IMR-90 (cell line): ENCODE measurements at regions of chrX and their contacts with region 1.

Region 1: DNA sequence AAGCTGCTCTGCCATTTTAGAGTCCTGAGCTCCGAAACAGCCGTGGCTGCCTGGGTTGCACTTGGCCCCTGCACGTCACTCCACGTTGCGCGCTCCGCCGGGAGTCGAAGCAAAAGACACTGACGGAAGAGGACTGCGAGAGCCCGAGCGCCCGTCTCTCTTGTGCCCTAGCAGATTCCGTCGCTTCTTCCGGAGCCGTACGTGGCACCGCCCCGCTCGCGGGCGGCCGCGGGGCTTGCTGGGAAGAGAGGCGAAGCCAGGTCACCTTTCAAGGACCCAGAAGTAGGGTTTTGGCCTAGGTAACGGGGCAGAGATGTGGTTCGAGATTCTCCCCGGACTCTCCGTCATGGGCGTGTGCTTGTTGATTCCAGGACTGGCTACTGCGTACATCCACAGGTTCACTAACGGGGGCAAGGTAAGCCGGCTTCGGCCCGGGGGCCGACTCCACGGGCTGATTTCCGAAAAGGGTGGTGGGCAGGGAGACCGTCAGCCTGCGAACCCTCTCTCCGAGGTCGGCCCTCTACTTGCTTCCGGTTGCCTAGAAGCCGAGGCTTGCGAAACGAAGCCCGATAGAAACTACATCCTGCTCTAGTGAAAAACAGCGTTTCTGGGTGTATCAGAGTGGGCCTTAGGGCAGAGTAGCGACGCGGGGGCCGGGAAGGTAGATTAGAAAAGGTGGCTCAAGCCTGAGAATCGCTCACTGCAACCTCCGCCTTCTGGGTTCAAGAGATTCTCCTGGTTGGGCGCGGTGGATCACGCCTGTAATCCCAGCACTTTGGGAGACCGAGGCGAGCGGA is at the starts of genes NDUFA1 and RNF113A:
- DNase-seq: peak; percentile 81
- ATAC-seq: peak; percentile 93
- H3K4me3 ChIP-seq: peak within 1 kb of the TSS; percentile 89
- H3K27ac ChIP-seq: peak within 1 kb of the TSS; percentile 88
- H3K4me1 ChIP-seq: no peaks in the 10 kb centered on the region
- H3K27me3 ChIP-seq: no peaks in the 10 kb centered on the region
- CTCF ChIP-seq: no peak
- POLR2A ChIP-seq: peak; percentile 79; the same call in 1 of the 2 replicates
- RAD21 ChIP-seq: no peak
- total RNA-seq, gene NDUFA1: 12.5 and 47.5 TPM in 2 replicates
- total RNA-seq, gene RNF113A: 16.5 and 20.6 TPM in 2 replicates

Region 2: GRCh38 chrX:119791438-119792231 is 80.2 kb before region 1 on chrX and contains the start of gene RPL39:
- CTCF ChIA-PET with region 1: no interaction called
- POLR2A ChIA-PET with region 1: no interaction called
- dilution Hi-C with region 1: no loop called
- in situ Hi-C with region 1: no loop called
- intact Hi-C with region 1: loop called (anchors 2 kb)
- DNase-seq: peak; percentile 87
- ATAC-seq: peak; percentile 94
- H3K4me3 ChIP-seq: peak within 1 kb of the TSS; percentile 72
- H3K27ac ChIP-seq: peak within 1 kb of the TSS; percentile 86
- H3K4me1 ChIP-seq: peaks cover 3% of the 10 kb centered on the region; the same call in 1 of the 2 replicates
- H3K27me3 ChIP-seq: no peaks in the 10 kb centered on the region
- CTCF ChIP-seq: no peak
- POLR2A ChIP-seq: peak; percentile 96
- RAD21 ChIP-seq: no peak
- total RNA-seq, gene RPL39: 681 and 716 TPM in 2 replicates

Region 3: GRCh38 chrX:120334151-120334550 is 462.4 kb after region 1 on chrX:
- CTCF ChIA-PET with region 1: no interaction called
- POLR2A ChIA-PET with region 1: no interaction called
- dilution Hi-C with region 1: no loop called
- in situ Hi-C with region 1: no loop called
- intact Hi-C with region 1: no loop called
- DNase-seq: no peak
- ATAC-seq: no peak
- H3K4me3 ChIP-seq: no peak overlapping the region
- H3K27ac ChIP-seq: no peak overlapping the region
- H3K4me1 ChIP-seq: no peaks in the 10 kb centered on the region
- H3K27me3 ChIP-seq: no peaks in the 10 kb centered on the region
- CTCF ChIP-seq: no peak
- POLR2A ChIP-seq: no peak
- RAD21 ChIP-seq: no peak